HEK293 (cell line): ENCODE measurements at regions of chr6 and their contacts with region 1.

Region 1: GRCh38 chr6:112180095-112180820 is 74.1 kb downstream of the LAMA4 start:
- H3K4me3 ChIP-seq: no peak overlapping the region
- H3K27ac ChIP-seq: no peak overlapping the region
- H3K4me1 ChIP-seq: peaks cover 9% of the 10 kb centered on the region
- CTCF ChIP-seq: peak; percentile 54; the same call in 1 of the 2 replicates

Region 2: DNA sequence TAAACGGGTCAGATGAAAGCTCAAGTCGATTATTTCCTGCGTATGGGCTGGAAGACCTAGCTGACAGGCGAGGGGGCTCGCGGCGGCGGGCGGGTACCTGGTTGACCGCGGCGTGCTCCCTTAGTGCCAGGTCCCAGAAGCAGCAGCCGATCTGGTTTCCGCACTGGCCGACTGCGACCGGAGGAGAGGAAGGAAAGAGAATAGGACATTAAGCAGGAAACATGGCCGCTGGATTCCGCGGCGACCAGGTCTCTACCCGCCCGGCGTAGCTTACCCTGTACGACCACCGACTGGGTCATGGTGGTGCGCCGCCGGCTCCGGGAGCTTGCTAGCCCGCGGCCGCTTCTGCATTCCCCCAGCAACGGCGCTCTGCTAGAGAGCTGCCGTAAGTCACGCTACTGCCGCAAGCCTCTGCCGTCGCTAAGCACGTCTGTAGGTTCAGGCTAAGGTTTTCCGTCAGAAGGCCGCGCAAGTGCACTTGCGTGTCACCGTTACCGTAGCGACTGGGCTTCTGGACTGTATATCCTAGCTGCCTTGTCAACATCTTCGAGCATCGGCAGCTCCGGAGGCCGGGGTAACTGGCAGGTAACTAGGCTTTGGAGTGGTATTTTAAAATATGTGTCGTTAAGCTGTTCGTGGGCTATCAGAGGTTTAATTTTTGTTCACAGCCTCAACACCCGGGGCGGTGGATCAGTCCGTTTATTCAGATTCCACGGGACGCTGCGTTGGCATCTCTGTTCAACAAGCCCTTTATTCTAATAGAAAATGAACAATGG is 92.9 kb before region 1 on chr6 and contains the starts of genes FAM229B and TUBE1:
- CTCF ChIA-PET with region 1: interaction called, 12 read pairs
- POLR2A ChIA-PET with region 1: interaction called, 8 read pairs
- H3K4me3 ChIP-seq: peak within 1 kb of the TSS; percentile 83
- H3K27ac ChIP-seq: peak within 1 kb of the TSS; percentile 76
- H3K4me1 ChIP-seq: peaks cover 4% of the 10 kb centered on the region; the same call in 1 of the 2 replicates
- CTCF ChIP-seq: peak; percentile 50; the same call in 1 of the 2 replicates

Region 3: GRCh38 chr6:112149719-112150263 is 30.5 kb before region 1 on chr6:
- CTCF ChIA-PET with region 1: no interaction called
- POLR2A ChIA-PET with region 1: no interaction called
- H3K4me3 ChIP-seq: no peak overlapping the region
- H3K27ac ChIP-seq: no peak overlapping the region
- H3K4me1 ChIP-seq: no peaks in the 10 kb centered on the region
- CTCF ChIP-seq: no peak

Region 4: DNA sequence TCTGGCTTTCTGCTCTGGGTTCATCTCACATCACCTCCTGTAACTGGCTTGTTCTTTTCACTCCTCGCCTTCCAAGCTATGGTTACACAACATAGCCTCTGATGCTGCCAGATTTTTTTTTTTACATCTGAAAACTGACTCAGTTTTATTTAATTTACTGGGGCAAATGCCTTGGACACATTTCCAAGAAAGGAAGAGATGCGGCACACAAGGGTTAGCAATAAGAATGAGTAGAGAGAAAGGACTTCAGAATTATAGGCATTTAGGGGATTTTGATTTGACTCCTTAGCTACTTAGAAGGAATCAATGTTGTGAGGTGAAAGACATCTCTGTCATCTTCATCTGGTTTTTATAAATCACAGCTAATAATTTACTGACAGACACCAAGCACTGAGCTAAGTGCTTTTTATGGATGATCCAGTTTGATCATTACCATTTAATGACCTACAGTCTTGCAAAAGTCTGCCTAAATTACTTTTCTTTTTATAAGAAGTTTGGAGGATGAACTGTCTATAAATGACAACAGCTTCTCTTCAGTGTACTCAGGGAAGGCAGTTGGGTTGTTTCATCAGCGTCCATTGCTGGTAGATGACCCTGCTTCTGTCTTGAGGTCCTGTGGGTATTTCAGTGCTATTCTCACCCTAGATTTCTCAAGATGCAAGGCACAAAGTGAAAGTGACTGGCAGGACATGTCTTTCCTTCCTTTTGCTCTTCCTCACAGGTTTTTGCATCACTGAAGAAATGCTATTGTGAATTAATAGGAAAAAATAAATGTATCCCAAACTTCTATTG is 43.0 kb after region 1 on chr6:
- CTCF ChIA-PET with region 1: interaction called, 19 read pairs
- POLR2A ChIA-PET with region 1: interaction called, 3 read pairs
- H3K4me3 ChIP-seq: no peak overlapping the region
- H3K27ac ChIP-seq: no peak overlapping the region
- H3K4me1 ChIP-seq: peaks cover 14% of the 10 kb centered on the region
- CTCF ChIP-seq: no peak

Region 5: GRCh38 chr6:112253841-112254816 is 73.9 kb after region 1 on chr6 and contains the start of gene LAMA4:
- CTCF ChIA-PET with region 1: interaction called, 23 read pairs
- POLR2A ChIA-PET with region 1: interaction called, 5 read pairs
- H3K4me3 ChIP-seq: peak within 1 kb of the TSS; percentile 74
- H3K27ac ChIP-seq: peak within 1 kb of the TSS; percentile 94
- H3K4me1 ChIP-seq: peaks cover 24% of the 10 kb centered on the region
- CTCF ChIP-seq: peak; percentile 74

Region 6: GRCh38 chr6:112289038-112289566 is 108.8 kb after region 1 on chr6:
- CTCF ChIA-PET with region 1: interaction called, 56 read pairs
- POLR2A ChIA-PET with region 1: no interaction called
- H3K4me3 ChIP-seq: no peak overlapping the region
- H3K27ac ChIP-seq: peak overlapping the region; percentile 58; the same call in 1 of the 2 replicates
- H3K4me1 ChIP-seq: peaks cover 7% of the 10 kb centered on the region; the same call in 1 of the 2 replicates
- CTCF ChIP-seq: no peak

Region 7: GRCh38 chr6:112317041-112317860 is 137.0 kb after region 1 on chr6:
- CTCF ChIA-PET with region 1: interaction called, 31 read pairs
- POLR2A ChIA-PET with region 1: no interaction called
- H3K4me3 ChIP-seq: no peak overlapping the region
- H3K27ac ChIP-seq: no peak overlapping the region
- H3K4me1 ChIP-seq: no peaks in the 10 kb centered on the region
- CTCF ChIP-seq: no peak